AG04449 (cell line): ENCODE measurements at regions of chr4 and their contacts with region 1.

Region 1: GRCh38 chr4:171846232-171846631 is 33.0 kb downstream of the GALNTL6 start:
- DNase-seq: peak; percentile 17
- H3K4me3 ChIP-seq: no peak overlapping the region
- CTCF ChIP-seq: peak; percentile 77

Region 2: GRCh38 chr4:171524903-171525302 is 321.3 kb before region 1 on chr4:
- CTCF ChIA-PET with region 1: no interaction called
- POLR2A ChIA-PET with region 1: no interaction called
- DNase-seq: no peak
- H3K4me3 ChIP-seq: no peak overlapping the region
- CTCF ChIP-seq: no peak

Region 3: DNA sequence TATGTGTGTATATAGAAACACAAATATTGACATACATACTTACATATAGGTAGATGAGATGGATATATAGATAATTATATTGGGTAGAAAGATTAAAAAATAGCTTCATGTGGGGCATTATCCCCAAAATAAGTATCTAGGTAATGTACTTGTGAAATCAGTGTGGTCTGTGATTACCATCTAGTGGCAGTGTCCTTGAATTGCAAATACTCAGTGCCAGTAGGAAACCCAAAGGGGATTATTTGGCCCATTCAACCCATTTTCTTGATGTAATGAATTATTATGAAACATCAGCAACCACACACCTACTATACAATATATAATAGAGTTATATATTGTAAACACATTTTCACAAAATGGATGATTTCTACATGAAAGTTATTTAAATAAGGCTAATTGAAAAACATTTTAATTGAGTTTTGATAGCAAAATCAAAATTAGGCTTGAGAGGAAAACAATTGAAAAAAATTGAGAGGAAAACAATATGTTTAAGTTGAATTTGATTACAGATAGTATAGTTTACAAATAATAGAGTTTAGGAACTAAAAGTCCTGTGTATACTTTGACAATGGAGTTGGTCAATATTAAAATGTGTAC is 356.3 kb after region 1 on chr4:
- CTCF ChIA-PET with region 1: interaction called, 23 read pairs
- POLR2A ChIA-PET with region 1: no interaction called
- DNase-seq: no peak
- H3K4me3 ChIP-seq: no peak overlapping the region
- CTCF ChIP-seq: peak; percentile 60